Activated CD4-positive, alpha-beta T cell treated with anti-CD3 and anti-CD28 coated beads, Interleukin-2, amount 10 ng/mL, durations not matched to agents 24 days and 14 days (primary cell): ENCODE measurements at regions of chr5 and their contacts with region 1.

Region 1: DNA sequence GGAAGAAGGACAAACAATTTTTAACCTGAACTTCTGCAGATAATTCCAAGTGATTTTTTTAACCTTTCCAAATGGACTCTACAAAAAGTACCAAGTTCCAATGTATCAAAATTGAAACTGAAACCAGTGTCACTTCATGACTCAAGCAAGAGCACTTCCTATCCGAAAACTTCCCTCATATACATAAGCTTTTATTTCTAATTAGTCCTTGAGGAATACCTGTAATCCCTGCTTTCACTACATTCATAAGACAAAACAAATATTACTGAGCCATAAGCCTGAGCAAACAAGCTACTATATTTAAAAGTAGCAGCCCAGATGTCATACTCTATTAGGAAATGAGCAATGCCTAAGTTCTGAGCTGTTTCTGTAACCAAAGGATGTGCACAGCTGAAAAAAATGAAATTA is 224.4 kb downstream of the EBF1 start:
- DNase-seq: no peak
- H3K4me3 Mint-ChIP-seq: peak overlapping the region; percentile 57
- H3K27ac Mint-ChIP-seq: peak overlapping the region; percentile 81
- H3K4me1 Mint-ChIP-seq: peaks cover 27% of the 10 kb centered on the region
- H3K27me3 Mint-ChIP-seq: peaks cover 3% of the 10 kb centered on the region

Region 2: DNA sequence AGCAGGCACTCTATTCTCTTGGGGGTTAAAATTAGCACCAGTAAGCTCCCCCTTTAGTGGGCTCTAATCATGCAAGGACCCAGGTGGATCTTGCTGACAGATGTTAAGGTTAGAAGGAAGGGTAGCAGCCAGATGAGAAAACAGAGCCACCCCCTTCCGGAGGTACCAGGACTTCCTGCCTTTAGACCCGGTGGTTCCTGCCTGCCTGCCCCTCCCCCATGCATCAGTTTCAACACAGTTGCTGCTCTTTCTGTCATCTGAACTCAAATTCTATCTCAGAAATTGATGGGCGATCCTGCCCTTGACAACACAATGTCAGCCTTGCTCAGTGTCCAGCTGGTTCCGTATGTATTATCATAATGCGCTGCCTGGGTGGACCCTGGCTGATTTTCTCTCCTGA is 62.9 kb before region 1 on chr5:
- intact Hi-C with region 1: loop called (anchors 2 kb)
- DNase-seq: peak; percentile 82
- H3K4me3 Mint-ChIP-seq: peak overlapping the region; percentile 36
- H3K27ac Mint-ChIP-seq: peak overlapping the region; percentile 29
- H3K4me1 Mint-ChIP-seq: peaks cover 26% of the 10 kb centered on the region
- H3K27me3 Mint-ChIP-seq: peaks cover 5% of the 10 kb centered on the region

Region 3: GRCh38 chr5:158819840-158820620 is 55.2 kb before region 1 on chr5:
- intact Hi-C with region 1: loop called (anchors 1 kb)
- DNase-seq: peak; percentile 61
- H3K4me3 Mint-ChIP-seq: peak overlapping the region; percentile 60
- H3K27ac Mint-ChIP-seq: peak overlapping the region; percentile 76
- H3K4me1 Mint-ChIP-seq: peaks cover 45% of the 10 kb centered on the region
- H3K27me3 Mint-ChIP-seq: no peaks in the 10 kb centered on the region

Region 4: GRCh38 chr5:159100025-159100781 is 224.9 kb after region 1 on chr5:
- intact Hi-C with region 1: loop called (anchors 5 kb)
- DNase-seq: peak; percentile 96
- H3K4me3 Mint-ChIP-seq: peak overlapping the region; percentile 85
- H3K27ac Mint-ChIP-seq: peak overlapping the region; percentile 64
- H3K4me1 Mint-ChIP-seq: peaks cover 34% of the 10 kb centered on the region
- H3K27me3 Mint-ChIP-seq: peaks cover 83% of the 10 kb centered on the region